Ovary (tissue), 10 donors: ENCODE measurements at regions of chr10 and their contacts with region 1.

Region 1: DNA sequence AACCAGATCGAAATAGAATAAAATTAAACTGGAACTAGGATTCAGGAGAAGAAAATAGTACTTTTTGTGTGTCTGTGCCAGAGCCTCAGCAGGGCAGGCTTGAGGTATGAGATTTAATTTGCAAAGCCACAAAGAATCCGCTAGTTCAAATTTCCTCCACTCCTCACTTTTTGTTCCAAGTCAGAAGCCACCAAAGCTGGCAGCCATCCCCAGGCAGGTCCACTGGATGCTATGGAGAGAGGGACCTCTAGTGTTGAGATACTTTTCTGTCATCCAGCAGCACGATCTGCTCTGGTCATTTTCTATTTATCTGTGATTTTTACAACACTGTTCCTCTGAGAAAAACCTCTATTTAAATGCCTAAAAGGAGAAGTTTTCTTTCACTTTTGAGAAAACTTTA is 147.9 kb upstream of the FRMD4A start:
- DNase-seq: peak; percentile 41 to 78 (median 55)
- H3K4me3 ChIP-seq: no peak overlapping the region
- H3K27ac ChIP-seq: no peak overlapping the region
- H3K4me1 ChIP-seq: no peaks in the 10 kb centered on the region
- H3K27me3 ChIP-seq: no peaks in the 10 kb centered on the region
- CTCF ChIP-seq: peak in 1 of 3 donors; percentile 31
- EP300 ChIP-seq: no peak
- POLR2A ChIP-seq: no peak

Region 2: GRCh38 chr10:14191871-14192270 is 286.7 kb before region 1 on chr10:
- intact Hi-C with region 1: loop called in 1 of 4 experiments (anchors 10 kb)
- DNase-seq: no peak
- H3K4me3 ChIP-seq: no peak overlapping the region
- H3K27ac ChIP-seq: no peak overlapping the region
- H3K4me1 ChIP-seq: peaks cover 2% of the 10 kb centered on the region
- H3K27me3 ChIP-seq: no peaks in the 10 kb centered on the region
- CTCF ChIP-seq: no peak
- EP300 ChIP-seq: no peak
- POLR2A ChIP-seq: no peak